HepG2 (cell line): ENCODE measurements at regions of chr12 and their contacts with region 1.

Region 1: GRCh38 chr12:45878630-45879255 is 111.6 kb downstream of the SCAF11 start:
- DNase-seq: no peak
- ATAC-seq: no peak
- H3K4me3 ChIP-seq: no peak overlapping the region
- H3K27ac ChIP-seq: no peak overlapping the region
- H3K4me1 ChIP-seq: no peaks in the 10 kb centered on the region
- H3K27me3 ChIP-seq: no peaks in the 10 kb centered on the region
- CTCF ChIP-seq: no peak
- EP300 ChIP-seq: no peak
- POLR2A ChIP-seq: no peak
- RAD21 ChIP-seq: no peak

Region 2: DNA sequence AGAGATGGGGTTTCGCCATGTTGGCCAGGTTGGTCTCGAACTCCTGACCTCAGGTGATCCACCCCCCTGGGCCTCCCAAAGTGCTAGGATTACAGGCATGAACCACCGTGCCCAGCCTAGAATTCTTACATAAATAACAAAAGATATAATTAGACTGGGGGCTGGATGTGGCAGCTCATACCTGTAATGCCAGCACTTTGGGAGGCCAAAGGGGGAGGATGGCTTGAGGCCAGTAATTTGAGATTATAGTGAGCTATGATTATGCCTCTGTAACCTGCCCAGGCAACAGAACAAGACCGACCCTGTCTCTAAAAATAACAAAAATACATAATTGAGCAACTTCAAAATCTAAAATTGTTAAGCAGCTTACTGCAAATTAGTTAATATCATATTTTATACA is 18.8 kb before region 1 on chr12:
- CTCF ChIA-PET with region 1: no interaction called
- POLR2A ChIA-PET with region 1: no interaction called
- in situ Hi-C with region 1: no loop called
- intact Hi-C with region 1: loop called (anchors 1 kb)
- DNase-seq: no peak
- ATAC-seq: no peak
- H3K4me3 ChIP-seq: no peak overlapping the region
- H3K27ac ChIP-seq: no peak overlapping the region
- H3K4me1 ChIP-seq: no peaks in the 10 kb centered on the region
- H3K27me3 ChIP-seq: no peaks in the 10 kb centered on the region
- CTCF ChIP-seq: no peak
- EP300 ChIP-seq: no peak
- POLR2A ChIP-seq: no peak
- RAD21 ChIP-seq: no peak